GM12878 (cell line): ENCODE measurements at regions of chr6 and their contacts with region 1.

Region 1: DNA sequence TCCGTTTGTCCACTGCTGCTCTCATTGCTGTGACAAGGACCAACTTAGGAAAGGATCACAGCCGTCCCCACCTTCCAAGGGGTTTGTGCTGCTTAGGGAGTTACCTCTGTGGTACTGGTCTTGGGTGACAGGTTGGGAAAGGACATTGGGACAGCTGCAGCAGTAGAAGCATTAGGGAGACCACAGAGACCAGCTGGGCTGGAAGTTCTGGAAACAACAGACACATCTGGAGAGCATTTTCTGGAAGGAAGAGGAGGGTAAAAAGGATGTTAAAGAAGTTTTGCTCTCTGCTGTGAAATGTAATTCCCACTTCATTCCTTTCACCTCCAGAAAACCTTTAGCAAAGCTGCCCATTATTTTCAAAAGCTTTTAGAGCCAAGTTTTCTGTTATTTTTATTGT is 304.2 kb downstream of the LRFN2 start:
- DNase-seq: no peak
- ATAC-seq: no peak
- H3K4me3 ChIP-seq: no peak overlapping the region
- H3K27ac ChIP-seq: no peak overlapping the region
- H3K4me1 ChIP-seq: no peaks in the 10 kb centered on the region
- H3K27me3 ChIP-seq: peaks cover 0 to 5% of the 10 kb centered on the region in 2 experiments; a peak in 2 of 4 replicates
- CTCF ChIP-seq: no peak
- EP300 ChIP-seq: no peak
- POLR2A ChIP-seq: no peak
- RAD21 ChIP-seq: no peak

Region 2: DNA sequence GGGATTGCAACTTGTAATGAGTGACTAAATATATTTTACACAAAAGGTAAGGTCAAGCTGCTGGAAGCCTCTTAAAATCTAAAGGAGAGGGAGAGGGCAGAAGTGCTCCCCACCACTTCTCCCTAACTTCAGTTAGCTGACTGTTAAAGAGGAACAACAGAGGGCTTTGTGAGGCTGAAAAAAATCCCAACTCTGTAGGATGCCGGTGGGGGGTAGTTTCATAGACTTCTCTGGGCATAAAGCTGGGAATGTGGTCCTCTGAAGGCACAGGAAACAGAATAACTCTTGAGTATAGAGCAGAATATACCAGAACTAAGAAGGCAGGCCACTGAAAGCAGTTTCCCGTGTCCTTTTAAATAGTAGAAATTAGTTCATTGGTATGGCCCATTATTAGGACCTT is 629.4 kb before region 1 on chr6:
- CTCF ChIA-PET with region 1: no interaction called
- POLR2A ChIA-PET with region 1: no interaction called
- RAD21 ChIA-PET with region 1: no interaction called
- SMC1A ChIA-PET with region 1: no interaction called
- in situ Hi-C with region 1: no loop called
- intact Hi-C with region 1: no loop called
- DNase-seq: no peak
- ATAC-seq: no peak
- H3K4me3 ChIP-seq: no peak overlapping the region
- H3K27ac ChIP-seq: no peak overlapping the region
- H3K4me1 ChIP-seq: no peaks in the 10 kb centered on the region
- H3K27me3 ChIP-seq: no peaks in the 10 kb centered on the region
- CTCF ChIP-seq: no peak
- EP300 ChIP-seq: no peak
- POLR2A ChIP-seq: no peak
- RAD21 ChIP-seq: no peak

Region 3: DNA sequence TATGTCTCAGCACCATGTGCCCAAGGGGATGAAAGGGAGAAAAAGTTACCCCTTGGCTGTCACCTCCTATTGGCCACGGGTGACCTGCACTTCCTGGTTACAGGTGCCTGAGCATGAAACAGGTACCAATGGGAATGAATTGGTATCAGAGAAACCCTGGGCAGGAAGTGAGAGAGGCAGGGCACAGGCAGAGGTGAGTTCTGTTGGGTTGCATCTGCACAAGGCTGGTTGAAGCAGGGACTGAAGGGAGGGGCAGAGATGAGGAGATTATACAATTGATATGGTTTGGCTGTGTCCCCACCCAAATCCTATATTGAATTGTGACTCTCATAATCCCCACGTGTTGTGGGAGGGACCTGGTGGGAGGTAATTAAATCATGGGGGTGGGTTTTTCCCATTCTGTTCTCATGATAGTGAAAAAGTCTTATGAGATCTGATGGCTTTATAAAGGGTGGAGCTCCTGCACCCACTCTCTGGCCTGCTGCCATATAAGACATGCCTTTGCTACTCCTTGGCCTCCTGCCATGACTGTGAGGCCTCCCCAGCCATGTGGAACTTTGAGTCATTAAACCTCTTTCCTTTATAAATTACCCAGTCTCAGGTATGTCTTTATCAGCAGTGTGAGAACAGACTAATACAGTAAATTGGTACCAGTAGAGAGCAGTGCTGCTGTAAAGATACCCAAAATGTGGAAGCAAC is 12.4 kb after region 1 on chr6:
- CTCF ChIA-PET with region 1: interaction called, 4 read pairs
- POLR2A ChIA-PET with region 1: interaction called, 4 read pairs
- RAD21 ChIA-PET with region 1: no interaction called
- SMC1A ChIA-PET with region 1: interaction called, 11 read pairs
- in situ Hi-C with region 1: no loop called
- intact Hi-C with region 1: no loop called
- DNase-seq: no peak
- ATAC-seq: no peak
- H3K4me3 ChIP-seq: no peak overlapping the region
- H3K27ac ChIP-seq: no peak overlapping the region
- H3K4me1 ChIP-seq: no peaks in the 10 kb centered on the region
- H3K27me3 ChIP-seq: peaks cover 0 to 2% of the 10 kb centered on the region in 2 experiments; a peak in 1 of 4 replicates
- CTCF ChIP-seq: no peak
- EP300 ChIP-seq: no peak
- POLR2A ChIP-seq: no peak
- RAD21 ChIP-seq: no peak